ENCODE measurements at regions of chr1 and their contacts with region 1.

Region 1: DNA sequence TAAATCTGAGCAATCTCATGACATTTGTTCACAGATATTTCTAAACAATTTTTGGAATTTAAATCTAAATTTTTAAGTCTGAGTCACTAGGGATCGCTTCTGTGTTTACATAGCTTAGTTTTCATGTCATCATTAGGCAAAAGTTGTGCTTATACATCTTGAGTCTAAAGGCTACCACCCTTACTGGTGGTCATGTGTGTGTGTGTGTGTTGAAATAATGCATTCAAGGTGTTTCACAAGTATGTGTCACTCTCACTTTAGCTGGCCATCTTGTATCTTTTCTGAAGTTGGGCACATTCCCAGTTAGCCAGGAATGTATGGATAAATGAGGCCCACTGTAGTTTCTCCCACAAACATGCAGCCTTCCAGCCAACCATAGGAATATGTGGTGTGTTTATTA is 1162.5 kb upstream of the PRMT6 start:
- DNase-seq: no peak
- H3K4me3 ChIP-seq: no peak overlapping the region
- H3K27ac ChIP-seq: no peak overlapping the region
- H3K4me1 ChIP-seq: no peaks in the 10 kb centered on the region
- H3K27me3 ChIP-seq: no peaks in the 10 kb centered on the region
- CTCF ChIP-seq: no peak
- POLR2A ChIP-seq: no peak

Region 2: GRCh38 chr1:104467590-104467989 is 1426.4 kb before region 1 on chr1:
- intact Hi-C with region 1: loop called (anchors 10 kb)
- DNase-seq: no peak
- H3K4me3 ChIP-seq: no peak overlapping the region
- H3K27ac ChIP-seq: no peak overlapping the region
- H3K4me1 ChIP-seq: no peaks in the 10 kb centered on the region
- H3K27me3 ChIP-seq: no peaks in the 10 kb centered on the region
- CTCF ChIP-seq: no peak
- POLR2A ChIP-seq: no peak

Region 3: GRCh38 chr1:104621221-104621620 is 1272.8 kb before region 1 on chr1:
- intact Hi-C with region 1: no loop called
- DNase-seq: no peak
- H3K4me3 ChIP-seq: no peak overlapping the region
- H3K27ac ChIP-seq: no peak overlapping the region
- H3K4me1 ChIP-seq: no peaks in the 10 kb centered on the region
- H3K27me3 ChIP-seq: no peaks in the 10 kb centered on the region
- CTCF ChIP-seq: no peak
- POLR2A ChIP-seq: no peak

Region 4: GRCh38 chr1:105260001-105260400 is 634.0 kb before region 1 on chr1:
- intact Hi-C with region 1: no loop called
- DNase-seq: no peak
- H3K4me3 ChIP-seq: no peak overlapping the region
- H3K27ac ChIP-seq: no peak overlapping the region
- H3K4me1 ChIP-seq: no peaks in the 10 kb centered on the region
- H3K27me3 ChIP-seq: no peaks in the 10 kb centered on the region
- CTCF ChIP-seq: no peak
- POLR2A ChIP-seq: no peak

Region 5: DNA sequence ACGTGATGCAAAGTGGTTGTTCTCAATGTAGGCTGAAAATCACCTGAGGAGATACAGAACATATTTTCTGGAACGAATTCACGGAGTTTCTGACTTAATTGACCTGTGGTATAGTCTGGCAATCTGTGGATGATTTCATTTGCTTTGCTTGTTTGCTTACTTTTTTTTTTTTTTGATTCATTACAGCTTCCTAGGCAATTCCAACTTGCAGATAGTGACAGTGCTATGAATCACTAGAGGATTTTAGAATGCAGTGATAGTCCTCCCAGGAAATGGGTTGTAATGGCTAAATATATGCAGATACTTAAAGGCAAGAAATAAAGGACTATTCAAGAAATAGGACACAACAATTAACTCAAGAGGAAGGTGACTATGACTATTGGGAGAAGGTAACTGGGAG is 215.7 kb before region 1 on chr1:
- intact Hi-C with region 1: no loop called
- DNase-seq: no peak
- H3K4me3 ChIP-seq: no peak overlapping the region
- H3K27ac ChIP-seq: no peak overlapping the region
- H3K4me1 ChIP-seq: no peaks in the 10 kb centered on the region
- H3K27me3 ChIP-seq: no peaks in the 10 kb centered on the region
- CTCF ChIP-seq: no peak
- POLR2A ChIP-seq: no peak